ENCODE measurements at regions of chr20 and their contacts with region 1.

Region 1: GRCh38 chr20:14055127-14055742 is 59.9 kb downstream of the MACROD2 start:
- DNase-seq: peak in 1 of 2 experiments; percentile 65
- H3K4me3 ChIP-seq: no peak overlapping the region
- H3K4me3 Mint-ChIP-seq: no peak overlapping the region
- H3K27ac Mint-ChIP-seq: no peak overlapping the region
- H3K4me1 ChIP-seq: no peaks in the 10 kb centered on the region
- H3K4me1 Mint-ChIP-seq: no peaks in the 10 kb centered on the region
- H3K27me3 ChIP-seq: no peaks in the 10 kb centered on the region; the same call in 1 of the 2 replicates
- H3K27me3 Mint-ChIP-seq: peaks cover 11% of the 10 kb centered on the region
- CTCF ChIP-seq: peak; percentile 54 to 57

Region 2: DNA sequence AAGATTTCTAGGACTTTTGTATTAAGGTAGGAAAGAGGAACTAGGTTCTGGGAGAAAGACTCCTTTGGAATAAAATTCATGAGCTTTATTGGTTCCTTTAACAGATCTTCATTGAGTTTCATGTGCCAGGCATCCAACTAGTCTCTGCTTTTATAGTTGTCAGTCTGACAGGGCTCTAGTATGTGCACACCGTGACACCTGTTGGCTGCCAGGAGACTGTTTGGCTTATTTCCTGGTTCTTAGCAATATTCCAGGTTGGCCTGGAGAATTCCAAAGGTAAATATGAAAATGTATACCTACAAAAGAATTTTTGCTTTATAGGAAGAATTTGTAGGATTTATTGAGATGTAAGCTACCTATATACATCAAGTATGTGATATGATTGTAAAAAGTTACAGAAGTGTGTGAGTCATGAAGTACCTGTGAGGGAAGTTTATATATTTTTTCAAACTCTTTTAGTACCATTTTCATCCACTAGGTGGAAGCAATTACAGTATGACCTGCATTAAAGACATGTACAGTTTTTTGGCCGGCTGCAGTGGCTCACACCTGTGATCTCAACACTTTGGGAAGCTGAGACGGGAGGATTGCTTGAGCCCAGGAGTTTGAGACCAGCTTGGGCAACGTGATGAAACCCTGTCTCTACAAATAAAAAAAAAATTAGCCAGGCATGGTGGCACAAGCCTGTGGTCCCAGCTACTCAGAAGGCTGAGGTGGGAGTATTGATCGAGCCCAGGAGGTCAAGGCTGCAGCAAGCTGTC is 235.2 kb before region 1 on chr20:
- CTCF ChIA-PET with region 1: interaction called, 5 read pairs
- POLR2A ChIA-PET with region 1: no interaction called
- intact Hi-C with region 1: loop called (anchors 1 kb)
- DNase-seq: peak in 1 of 2 experiments; percentile 51
- H3K4me3 ChIP-seq: no peak overlapping the region
- H3K4me3 Mint-ChIP-seq: no peak overlapping the region
- H3K27ac Mint-ChIP-seq: no peak overlapping the region
- H3K4me1 ChIP-seq: no peaks in the 10 kb centered on the region
- H3K4me1 Mint-ChIP-seq: no peaks in the 10 kb centered on the region
- H3K27me3 ChIP-seq: no peaks in the 10 kb centered on the region; the same call in 1 of the 2 replicates
- H3K27me3 Mint-ChIP-seq: no peaks in the 10 kb centered on the region
- CTCF ChIP-seq: peak; percentile 48 to 58

Region 3: GRCh38 chr20:13898011-13898612 is 157.1 kb before region 1 on chr20:
- CTCF ChIA-PET with region 1: no interaction called
- POLR2A ChIA-PET with region 1: no interaction called
- intact Hi-C with region 1: loop called (anchors 1 kb)
- DNase-seq: peak in 1 of 2 experiments; percentile 15
- H3K4me3 ChIP-seq: no peak overlapping the region
- H3K4me3 Mint-ChIP-seq: no peak overlapping the region
- H3K27ac Mint-ChIP-seq: no peak overlapping the region
- H3K4me1 ChIP-seq: no peaks in the 10 kb centered on the region
- H3K4me1 Mint-ChIP-seq: no peaks in the 10 kb centered on the region
- H3K27me3 ChIP-seq: no peaks in the 10 kb centered on the region
- H3K27me3 Mint-ChIP-seq: peaks cover 15% of the 10 kb centered on the region
- CTCF ChIP-seq: peak; percentile 43